Activated T-helper 1 cell treated with anti-CD3 and anti-CD28 coated beads, Interleukin-12 subunit alpha, Interleukin-12 subunit beta, Interleukin-2, Interleukin-4 antibody, amounts not matched to agents 30 ng/mL and 10 ng/mL and 1 ng/mL, durations not matched to agents 14 hours and 24 hours and 36 hours (primary cell): ENCODE measurements at regions of chr12 and their contacts with region 1.

Region 1: DNA sequence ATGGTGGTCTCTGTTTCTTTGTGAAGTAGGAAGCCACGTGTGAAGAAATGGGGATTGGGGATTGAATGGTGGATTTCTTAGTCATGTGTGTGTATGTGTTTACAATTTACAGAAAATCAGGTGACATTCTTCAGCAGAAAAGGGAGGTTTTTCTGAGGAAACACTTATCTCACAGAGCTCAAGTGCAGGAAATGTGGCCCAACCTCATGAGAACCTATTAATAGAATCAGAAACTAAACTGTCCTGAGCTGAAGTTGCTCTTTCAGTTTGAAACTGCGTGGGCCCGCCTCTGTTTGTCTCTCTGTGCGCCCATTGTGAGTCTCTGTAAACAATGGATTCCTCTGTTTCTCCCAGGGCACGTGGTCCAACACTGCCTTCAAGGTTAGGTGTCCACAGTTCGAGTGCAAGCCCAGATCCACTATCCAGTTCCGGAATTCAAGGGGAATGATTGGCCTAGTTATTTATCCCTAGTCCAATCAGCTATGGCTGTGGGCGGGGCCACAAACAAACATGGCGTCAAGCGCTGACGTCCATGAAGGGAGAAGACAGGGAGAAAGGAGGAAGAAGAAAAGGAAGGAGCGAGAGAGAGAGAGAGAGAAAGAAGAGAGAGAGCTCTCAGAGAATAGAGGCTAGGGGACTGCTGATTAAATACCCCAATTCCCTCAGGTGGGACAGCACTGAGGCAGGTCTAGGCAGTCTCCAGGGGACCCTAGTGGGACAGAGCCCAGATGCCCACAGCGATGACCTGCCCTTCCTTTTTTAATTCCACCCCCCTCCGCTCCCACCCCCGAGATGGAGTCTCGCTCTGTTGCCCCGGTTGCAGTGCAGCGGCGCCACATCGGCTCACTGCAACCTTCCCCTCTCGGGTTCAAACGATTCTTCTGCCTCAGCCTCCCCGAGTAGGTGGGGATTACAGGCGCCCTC is 31.4 kb upstream of the C12orf76 start:
- DNase-seq: peak; percentile 76
- H3K4me3 Mint-ChIP-seq: peak overlapping the region; percentile 66
- H3K27ac Mint-ChIP-seq: peak overlapping the region; percentile 98
- H3K4me1 Mint-ChIP-seq: peaks cover 43% of the 10 kb centered on the region
- H3K27me3 Mint-ChIP-seq: no peaks in the 10 kb centered on the region

Region 2: DNA sequence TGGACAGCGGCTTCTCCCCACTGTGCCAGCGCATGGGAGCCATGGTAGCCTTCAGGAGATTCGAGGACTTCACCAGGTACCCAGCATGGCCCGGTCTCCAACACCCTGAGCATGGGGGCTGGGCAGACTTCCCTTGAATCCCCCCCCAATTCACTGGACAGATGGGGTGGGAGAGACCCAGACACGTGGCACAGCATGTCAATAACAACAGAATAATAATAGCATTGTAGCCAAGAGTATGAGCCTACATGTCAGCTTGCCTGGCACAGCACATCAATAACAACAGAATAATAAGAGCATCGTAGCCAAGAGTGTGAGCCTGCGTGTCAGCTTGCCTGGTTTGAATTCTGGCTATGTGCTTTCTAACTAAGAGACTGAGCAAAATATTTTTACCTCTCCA is 847.0 kb before region 1 on chr12:
- intact Hi-C with region 1: no loop called
- DNase-seq: no peak
- H3K4me3 Mint-ChIP-seq: no peak overlapping the region
- H3K27ac Mint-ChIP-seq: no peak overlapping the region
- H3K4me1 Mint-ChIP-seq: no peaks in the 10 kb centered on the region
- H3K27me3 Mint-ChIP-seq: no peaks in the 10 kb centered on the region

Region 3: DNA sequence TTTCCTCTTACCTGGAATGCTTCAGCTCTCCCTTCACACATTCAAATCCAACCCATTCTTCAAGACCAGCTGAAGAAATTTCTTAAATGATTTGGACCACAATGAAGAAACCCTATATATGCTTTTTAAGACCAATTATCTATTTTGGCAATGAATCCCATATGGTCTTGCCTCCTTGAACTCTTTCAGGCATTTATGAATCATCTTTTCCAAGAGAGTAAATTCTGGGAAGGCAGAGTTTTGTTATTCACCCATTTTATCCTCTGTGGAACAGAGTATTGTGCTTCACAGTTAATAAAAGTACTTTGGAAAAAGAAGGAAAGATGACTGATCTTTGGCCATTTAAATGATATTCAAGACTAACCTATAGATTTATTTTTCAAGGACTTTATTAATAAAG is 97.5 kb before region 1 on chr12:
- intact Hi-C with region 1: loop called (anchors 1 kb)
- DNase-seq: no peak
- H3K4me3 Mint-ChIP-seq: peak overlapping the region; percentile 16
- H3K27ac Mint-ChIP-seq: peak overlapping the region; percentile 74
- H3K4me1 Mint-ChIP-seq: peaks cover 51% of the 10 kb centered on the region
- H3K27me3 Mint-ChIP-seq: no peaks in the 10 kb centered on the region

Region 4: GRCh38 chr12:110039085-110039807 is 40.5 kb before region 1 on chr12:
- intact Hi-C with region 1: loop called (anchors 1 kb)
- DNase-seq: peak; percentile 34
- H3K4me3 Mint-ChIP-seq: peak overlapping the region; percentile 50
- H3K27ac Mint-ChIP-seq: peak overlapping the region; percentile 94
- H3K4me1 Mint-ChIP-seq: peaks cover 63% of the 10 kb centered on the region
- H3K27me3 Mint-ChIP-seq: no peaks in the 10 kb centered on the region

Region 5: GRCh38 chr12:110048242-110049027 is 31.3 kb before region 1 on chr12 and contains the start of gene C12orf76:
- intact Hi-C with region 1: loop called (anchors 1 kb)
- DNase-seq: peak; percentile 89
- H3K4me3 Mint-ChIP-seq: peak within 1 kb of the TSS; percentile 84
- H3K27ac Mint-ChIP-seq: peak within 1 kb of the TSS; percentile 91
- H3K4me1 Mint-ChIP-seq: peaks cover 34% of the 10 kb centered on the region
- H3K27me3 Mint-ChIP-seq: no peaks in the 10 kb centered on the region
- total RNA-seq, gene C12orf76: 20.3 and 20.8 TPM in 2 replicates

Region 6: DNA sequence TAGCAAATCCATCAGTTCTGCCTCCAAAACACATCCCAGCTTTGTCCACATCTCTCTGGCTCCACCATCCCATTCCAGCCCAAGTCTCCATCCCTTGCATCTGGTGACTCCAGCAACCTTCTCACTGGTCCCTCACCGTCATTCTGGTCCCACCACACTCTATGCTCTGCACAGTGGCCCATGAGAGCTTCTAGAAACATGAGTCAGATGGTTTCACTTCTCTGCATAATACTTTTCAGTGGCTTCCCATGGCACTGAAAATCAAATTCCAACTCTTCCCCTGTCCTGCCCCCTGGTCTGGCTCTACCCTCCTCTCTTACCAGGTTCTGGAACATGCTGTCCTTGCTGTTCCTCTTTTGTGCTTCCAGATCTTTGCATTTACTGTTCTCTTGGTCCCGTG is 14.2 kb before region 1 on chr12:
- intact Hi-C with region 1: loop called (anchors 1 kb)
- DNase-seq: no peak
- H3K4me3 Mint-ChIP-seq: no peak overlapping the region
- H3K27ac Mint-ChIP-seq: peak overlapping the region; percentile 24
- H3K4me1 Mint-ChIP-seq: peaks cover 33% of the 10 kb centered on the region
- H3K27me3 Mint-ChIP-seq: peaks cover 2% of the 10 kb centered on the region